Kidney (tissue), 22 donors: ENCODE measurements at regions of chr21 and their contacts with region 1.

Region 1: GRCh38 chr21:32261929-32262328 is 16.9 kb downstream of the MIS18A start:
- DNase-seq: no peak
- H3K4me3 ChIP-seq: no peak overlapping the region
- H3K27ac ChIP-seq: no peak overlapping the region
- H3K4me1 ChIP-seq: peaks cover 0 to 8% (median 2%) of the 10 kb centered on the region in 3 donors
- H3K27me3 ChIP-seq: no peaks in the 10 kb centered on the region
- CTCF ChIP-seq: no peak

Region 2: GRCh38 chr21:31866077-31866511 is 395.8 kb before region 1 on chr21:
- intact Hi-C with region 1: loop called (anchors 5 kb)
- DNase-seq: peak; percentile 91 to 94 (median 93)
- H3K4me3 ChIP-seq: no peak overlapping the region
- H3K27ac ChIP-seq: no peak overlapping the region
- H3K4me1 ChIP-seq: no peaks in the 10 kb centered on the region
- H3K27me3 ChIP-seq: no peaks in the 10 kb centered on the region
- CTCF ChIP-seq: peak; percentile 84

Region 3: GRCh38 chr21:32114419-32115035 is 147.4 kb before region 1 on chr21:
- intact Hi-C with region 1: no loop called
- DNase-seq: no peak
- H3K4me3 ChIP-seq: no peak overlapping the region
- H3K27ac ChIP-seq: no peak overlapping the region
- H3K4me1 ChIP-seq: no peaks in the 10 kb centered on the region
- H3K27me3 ChIP-seq: no peaks in the 10 kb centered on the region
- CTCF ChIP-seq: no peak